ENCODE measurements at regions of chr10 and their contacts with region 1.

Region 1: GRCh38 chr10:64515970-64516699 is 994.9 kb downstream of the REEP3 start:
- DNase-seq: no peak
- ATAC-seq: no peak
- H3K4me3 ChIP-seq: no peak overlapping the region
- H3K4me3 Mint-ChIP-seq: no peak overlapping the region
- H3K27ac ChIP-seq: no peak overlapping the region
- H3K27ac Mint-ChIP-seq: no peak overlapping the region
- H3K4me1 ChIP-seq: no peaks in the 10 kb centered on the region
- H3K4me1 Mint-ChIP-seq: no peaks in the 10 kb centered on the region
- H3K27me3 ChIP-seq: no peaks in the 10 kb centered on the region
- H3K27me3 Mint-ChIP-seq: no peaks in the 10 kb centered on the region
- CTCF ChIP-seq: no peak

Region 2: DNA sequence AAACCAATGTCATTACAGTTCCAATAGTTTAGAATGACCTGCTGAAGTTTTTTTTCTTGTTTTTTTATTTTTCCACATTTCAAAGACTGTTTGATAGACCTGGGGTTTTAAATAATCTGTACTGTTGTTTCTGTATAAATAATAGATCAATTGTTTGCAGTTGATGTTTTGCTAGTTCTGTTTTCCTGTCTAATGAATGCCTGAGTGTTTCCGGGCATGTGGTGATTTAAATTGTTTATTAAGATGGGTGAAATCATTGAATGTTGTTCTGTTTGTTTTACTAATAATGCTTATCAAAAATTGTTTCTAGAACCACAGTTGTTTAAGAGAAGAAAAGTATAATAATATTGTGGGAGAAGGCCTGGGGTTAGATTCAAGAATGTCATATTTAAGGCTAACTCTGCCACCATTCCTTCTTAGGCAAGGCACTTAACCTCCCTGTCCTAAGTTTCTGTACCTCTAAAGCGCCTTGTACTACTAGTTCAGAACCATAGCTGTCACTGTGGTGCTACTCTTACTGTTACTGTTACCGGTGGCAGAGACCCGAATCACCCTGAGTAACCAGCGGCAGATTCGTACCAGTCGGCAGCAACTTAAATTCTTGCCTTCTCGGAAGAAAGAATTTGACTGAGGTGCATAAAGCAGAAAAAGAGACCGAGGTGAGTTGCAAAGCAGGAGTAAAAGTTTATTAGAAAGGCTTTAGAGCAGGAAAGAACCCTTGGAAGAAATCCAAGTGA is 19.2 kb after region 1 on chr10:
- CTCF ChIA-PET with region 1: no interaction called
- POLR2A ChIA-PET with region 1: no interaction called
- intact Hi-C with region 1: loop called in 1 of 2 experiments (anchors 1 kb)
- DNase-seq: no peak
- ATAC-seq: no peak
- H3K4me3 ChIP-seq: no peak overlapping the region
- H3K4me3 Mint-ChIP-seq: no peak overlapping the region
- H3K27ac ChIP-seq: no peak overlapping the region
- H3K27ac Mint-ChIP-seq: no peak overlapping the region
- H3K4me1 ChIP-seq: no peaks in the 10 kb centered on the region
- H3K4me1 Mint-ChIP-seq: no peaks in the 10 kb centered on the region
- H3K27me3 ChIP-seq: no peaks in the 10 kb centered on the region
- H3K27me3 Mint-ChIP-seq: no peaks in the 10 kb centered on the region
- CTCF ChIP-seq: no peak